OCI-LY7 (cell line): ENCODE measurements at regions of chr6 and their contacts with region 1.

Region 1: GRCh38 chr6:113664909-113665308 is 192.2 kb upstream of the MARCKS start:
- DNase-seq: no peak
- H3K4me3 ChIP-seq: no peak overlapping the region
- H3K27ac ChIP-seq: no peak overlapping the region
- H3K4me1 ChIP-seq: peaks cover 14% of the 10 kb centered on the region
- CTCF ChIP-seq: no peak

Region 2: DNA sequence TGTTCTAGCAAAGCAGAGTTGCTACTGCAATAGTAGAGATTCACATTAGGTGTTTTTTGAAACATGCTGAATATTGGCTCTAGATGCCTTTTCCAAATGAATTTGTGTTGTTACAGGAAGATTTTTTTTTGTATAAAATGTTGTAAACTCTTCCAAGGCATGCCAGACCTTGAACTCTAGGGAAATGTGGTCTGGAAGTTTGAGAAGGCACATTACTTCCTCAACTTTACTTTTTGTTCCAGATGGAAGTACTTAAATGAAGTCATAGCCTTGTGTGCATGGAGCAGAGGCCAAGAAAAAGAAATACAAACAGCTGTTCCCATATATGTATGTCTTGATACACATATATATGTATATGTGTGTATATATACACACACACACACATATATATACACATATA is 393.5 kb before region 1 on chr6:
- CTCF ChIA-PET with region 1: no interaction called
- POLR2A ChIA-PET with region 1: no interaction called
- intact Hi-C with region 1: no loop called
- DNase-seq: no peak
- H3K4me3 ChIP-seq: no peak overlapping the region
- H3K27ac ChIP-seq: no peak overlapping the region
- H3K4me1 ChIP-seq: no peaks in the 10 kb centered on the region
- CTCF ChIP-seq: no peak

Region 3: GRCh38 chr6:113654396-113654795 is 10.5 kb before region 1 on chr6:
- CTCF ChIA-PET with region 1: no interaction called
- POLR2A ChIA-PET with region 1: interaction called, 15 read pairs
- intact Hi-C with region 1: no loop called
- DNase-seq: no peak
- H3K4me3 ChIP-seq: no peak overlapping the region
- H3K27ac ChIP-seq: no peak overlapping the region
- H3K4me1 ChIP-seq: peaks cover 25% of the 10 kb centered on the region
- CTCF ChIP-seq: no peak